ENCODE measurements at regions of chr1 and their contacts with region 1.

Region 1: DNA sequence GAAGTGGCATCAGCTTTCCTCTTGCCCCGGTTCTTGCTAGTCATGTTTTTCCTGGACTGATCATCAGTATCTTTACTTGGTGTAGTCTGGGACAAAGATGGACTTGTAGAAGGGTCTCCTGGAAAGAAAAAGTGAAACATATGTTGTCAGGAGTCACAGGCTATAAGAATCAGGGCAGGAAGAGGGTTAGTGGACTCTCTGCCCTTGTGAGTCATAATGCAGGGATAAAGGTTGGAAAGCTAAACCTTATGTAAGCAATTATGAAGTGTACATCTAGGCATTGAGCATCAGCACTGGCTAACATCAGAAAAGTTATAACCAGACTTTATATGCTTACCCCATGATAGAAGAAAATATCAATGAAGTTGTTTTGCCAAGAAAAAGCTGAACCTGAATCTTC is 51.2 kb downstream of the XKR8 start:
- DNase-seq: no peak
- ATAC-seq: no peak
- H3K4me3 ChIP-seq: no peak overlapping the region
- H3K4me3 Mint-ChIP-seq: no peak overlapping the region
- H3K27ac ChIP-seq: no peak overlapping the region
- H3K27ac Mint-ChIP-seq: no peak overlapping the region
- H3K4me1 ChIP-seq: no peaks in the 10 kb centered on the region
- H3K4me1 Mint-ChIP-seq: no peaks in the 10 kb centered on the region
- H3K27me3 ChIP-seq: no peaks in the 10 kb centered on the region
- H3K27me3 Mint-ChIP-seq: no peaks in the 10 kb centered on the region
- CTCF ChIP-seq: no peak

Region 2: GRCh38 chr1:28050776-28051175 is 39.8 kb after region 1 on chr1:
- CTCF ChIA-PET with region 1: interaction called, 3 read pairs
- POLR2A ChIA-PET with region 1: no interaction called
- intact Hi-C with region 1: loop called in 1 of 2 experiments (anchors 5 kb)
- DNase-seq: no peak
- ATAC-seq: no peak
- H3K4me3 ChIP-seq: no peak overlapping the region
- H3K4me3 Mint-ChIP-seq: no peak overlapping the region
- H3K27ac ChIP-seq: no peak overlapping the region
- H3K27ac Mint-ChIP-seq: no peak overlapping the region
- H3K4me1 ChIP-seq: no peaks in the 10 kb centered on the region
- H3K4me1 Mint-ChIP-seq: peaks cover 8% of the 10 kb centered on the region
- H3K27me3 ChIP-seq: no peaks in the 10 kb centered on the region
- H3K27me3 Mint-ChIP-seq: no peaks in the 10 kb centered on the region
- CTCF ChIP-seq: no peak

Measured in CD4-positive, alpha-beta T cell (primary cell).